Heart left ventricle (tissue), 16 donors: ENCODE measurements at regions of chr18 and their contacts with region 1.

Region 1: DNA sequence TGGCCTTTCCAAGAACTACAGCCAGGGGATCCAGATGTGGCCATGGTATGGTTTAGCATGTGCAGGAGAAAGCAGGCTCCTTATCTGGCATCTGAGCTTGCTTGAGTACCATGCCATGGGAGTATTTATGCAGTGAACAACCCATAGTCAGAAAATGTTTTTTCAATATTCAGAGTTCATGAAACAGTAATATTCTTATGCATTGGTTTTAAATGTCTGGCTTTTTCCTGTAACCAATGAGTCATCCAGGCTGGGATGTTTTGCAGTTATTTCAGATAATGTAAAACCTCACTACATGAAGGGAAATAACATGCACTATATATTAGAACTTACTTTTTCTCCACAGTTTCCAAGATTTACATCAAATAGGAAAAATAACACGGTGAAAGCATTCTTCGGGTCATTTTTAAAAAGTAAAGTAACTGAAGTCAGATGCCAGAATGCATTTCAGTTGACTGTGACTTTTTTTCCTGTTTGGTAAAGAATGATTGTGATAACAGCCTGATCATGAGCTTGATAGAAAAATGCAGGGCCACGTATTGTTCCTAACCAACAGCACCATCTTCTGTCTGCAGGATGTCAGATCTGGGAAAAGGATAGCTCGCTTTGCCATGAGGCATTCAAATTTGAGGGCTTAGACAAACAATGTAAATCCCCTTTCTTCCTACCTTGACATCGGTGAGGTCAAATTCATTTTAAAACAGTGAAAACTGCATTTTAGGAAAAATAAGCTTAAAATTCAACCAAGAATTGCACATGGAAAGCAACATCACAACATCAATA is 152.8 kb downstream of the DSC3 start:
- DNase-seq: no peak
- ATAC-seq: no peak
- H3K4me3 ChIP-seq: no peak overlapping the region
- H3K27ac ChIP-seq: no peak overlapping the region
- H3K4me1 ChIP-seq: no peaks in the 10 kb centered on the region
- H3K27me3 ChIP-seq: no peaks in the 10 kb centered on the region
- CTCF ChIP-seq: peak in 10 of 12 donors; percentile 12 to 49 (median 36)
- POLR2A ChIP-seq: no peak

Region 2: GRCh38 chr18:30457156-30457555 is 432.6 kb before region 1 on chr18:
- intact Hi-C with region 1: loop called in 1 of 10 experiments (anchors 10 kb)
- DNase-seq: no peak
- ATAC-seq: no peak
- H3K4me3 ChIP-seq: no peak overlapping the region
- H3K27ac ChIP-seq: no peak overlapping the region
- H3K4me1 ChIP-seq: no peaks in the 10 kb centered on the region
- H3K27me3 ChIP-seq: no peaks in the 10 kb centered on the region
- CTCF ChIP-seq: peak in 1 of 12 donors; percentile 9
- POLR2A ChIP-seq: no peak